ENCODE measurements at regions of chr9 and their contacts with region 1.

Region 1: GRCh38 chr9:1050116-1050800 is at the start of gene DMRT2:
- DNase-seq: no peak
- ATAC-seq: peak; percentile 78
- H3K4me3 ChIP-seq: no peak within 1 kb of the TSS
- H3K27ac ChIP-seq: no peak within 1 kb of the TSS
- H3K4me1 ChIP-seq: no peaks in the 10 kb centered on the region
- H3K27me3 ChIP-seq: peaks cover 10 to 38% of the 10 kb centered on the region in 2 experiments
- CTCF ChIP-seq: no peak
- EP300 ChIP-seq: no peak
- POLR2A ChIP-seq: no peak
- RAD21 ChIP-seq: no peak
- polyA plus RNA-seq, gene DMRT2: 0.08 to 0.18 TPM

Region 2: GRCh38 chr9:859251-859650 is 191.0 kb before region 1 on chr9:
- CTCF ChIA-PET with region 1: no interaction called
- POLR2A ChIA-PET with region 1: no interaction called
- RAD21 ChIA-PET with region 1: no interaction called
- SMC1A ChIA-PET with region 1: no interaction called
- in situ Hi-C with region 1: no loop called
- intact Hi-C with region 1: no loop called
- DNase-seq: peak; percentile 69
- ATAC-seq: peak; percentile 99
- H3K4me3 ChIP-seq: no peak overlapping the region
- H3K27ac ChIP-seq: no peak overlapping the region
- H3K4me1 ChIP-seq: peaks cover 7% of the 10 kb centered on the region; the same call in 1 of the 2 replicates
- H3K27me3 ChIP-seq: no peaks in the 10 kb centered on the region
- CTCF ChIP-seq: no peak; a peak in 1 of 6 replicates
- EP300 ChIP-seq: peak; percentile 81 to 86; a peak in 3 of 4 replicates
- POLR2A ChIP-seq: no peak
- RAD21 ChIP-seq: no peak

Region 3: GRCh38 chr9:1039589-1039988 is 10.7 kb before region 1 on chr9:
- CTCF ChIA-PET with region 1: interaction called, 5 read pairs
- POLR2A ChIA-PET with region 1: interaction called, 6 read pairs
- RAD21 ChIA-PET with region 1: interaction called, 11 read pairs
- SMC1A ChIA-PET with region 1: interaction called, 17 read pairs
- in situ Hi-C with region 1: no loop called
- intact Hi-C with region 1: no loop called
- DNase-seq: no peak
- ATAC-seq: no peak
- H3K4me3 ChIP-seq: no peak overlapping the region
- H3K27ac ChIP-seq: no peak overlapping the region
- H3K4me1 ChIP-seq: no peaks in the 10 kb centered on the region
- H3K27me3 ChIP-seq: peaks cover 2 to 8% of the 10 kb centered on the region in 2 experiments
- CTCF ChIP-seq: no peak
- EP300 ChIP-seq: no peak
- POLR2A ChIP-seq: no peak
- RAD21 ChIP-seq: no peak

Region 4: GRCh38 chr9:1065130-1065529 is 14.9 kb after region 1 on chr9:
- CTCF ChIA-PET with region 1: interaction called, 4 read pairs
- POLR2A ChIA-PET with region 1: interaction called, 5 read pairs
- RAD21 ChIA-PET with region 1: no interaction called
- SMC1A ChIA-PET with region 1: interaction called, 10 read pairs
- in situ Hi-C with region 1: no loop called
- intact Hi-C with region 1: no loop called
- DNase-seq: no peak
- ATAC-seq: no peak
- H3K4me3 ChIP-seq: no peak overlapping the region
- H3K27ac ChIP-seq: no peak overlapping the region
- H3K4me1 ChIP-seq: no peaks in the 10 kb centered on the region
- H3K27me3 ChIP-seq: no peaks in the 10 kb centered on the region
- CTCF ChIP-seq: no peak
- EP300 ChIP-seq: no peak
- POLR2A ChIP-seq: no peak
- RAD21 ChIP-seq: no peak

Measured in GM12878 (cell line).